ENCODE measurements at regions of chr17 and their contacts with region 1.

Region 1: GRCh38 chr17:80263253-80264204 is 2.9 kb downstream of the RNF213 start:
- DNase-seq: peak; percentile 94
- ATAC-seq: peak; percentile 37
- H3K4me3 Mint-ChIP-seq: peak overlapping the region; percentile 98
- H3K27ac Mint-ChIP-seq: peak overlapping the region; percentile 91
- H3K4me1 Mint-ChIP-seq: peaks cover 55% of the 10 kb centered on the region
- H3K27me3 Mint-ChIP-seq: no peaks in the 10 kb centered on the region

Region 2: GRCh38 chr17:79839363-79840268 is 423.9 kb before region 1 on chr17 and contains the start of gene CBX4:
- CTCF ChIA-PET with region 1: no interaction called
- POLR2A ChIA-PET with region 1: no interaction called
- intact Hi-C with region 1: loop called in 1 of 2 experiments (anchors 5 kb)
- DNase-seq: peak; percentile 96
- ATAC-seq: peak; percentile 80
- H3K4me3 Mint-ChIP-seq: peak within 1 kb of the TSS; percentile 92
- H3K27ac Mint-ChIP-seq: peak within 1 kb of the TSS; percentile 82
- H3K4me1 Mint-ChIP-seq: peaks cover 49% of the 10 kb centered on the region
- H3K27me3 Mint-ChIP-seq: peaks cover 29% of the 10 kb centered on the region
- total RNA-seq, gene CBX4: 14.9 to 18.5 TPM

Region 3: GRCh38 chr17:80101011-80101945 is 162.3 kb before region 1 on chr17 and contains the start of gene GAA:
- CTCF ChIA-PET with region 1: interaction called, 6 read pairs
- POLR2A ChIA-PET with region 1: no interaction called
- intact Hi-C with region 1: loop called in 1 of 2 experiments (anchors 1 kb)
- DNase-seq: peak; percentile 93
- ATAC-seq: peak; percentile 89
- H3K4me3 Mint-ChIP-seq: peak within 1 kb of the TSS; percentile 84
- H3K27ac Mint-ChIP-seq: peak within 1 kb of the TSS; percentile 68
- H3K4me1 Mint-ChIP-seq: peaks cover 26% of the 10 kb centered on the region
- H3K27me3 Mint-ChIP-seq: no peaks in the 10 kb centered on the region
- total RNA-seq, gene GAA: 28.4 to 32.8 TPM

Region 4: GRCh38 chr17:80219013-80219762 is 44.3 kb before region 1 on chr17:
- CTCF ChIA-PET with region 1: no interaction called
- POLR2A ChIA-PET with region 1: interaction called, 4 read pairs
- intact Hi-C with region 1: loop called (anchors 1 to 2 kb)
- DNase-seq: peak; percentile 95
- ATAC-seq: peak; percentile 87
- H3K4me3 Mint-ChIP-seq: peak overlapping the region; percentile 89
- H3K27ac Mint-ChIP-seq: peak overlapping the region; percentile 92
- H3K4me1 Mint-ChIP-seq: peaks cover 27% of the 10 kb centered on the region
- H3K27me3 Mint-ChIP-seq: no peaks in the 10 kb centered on the region

Region 5: DNA sequence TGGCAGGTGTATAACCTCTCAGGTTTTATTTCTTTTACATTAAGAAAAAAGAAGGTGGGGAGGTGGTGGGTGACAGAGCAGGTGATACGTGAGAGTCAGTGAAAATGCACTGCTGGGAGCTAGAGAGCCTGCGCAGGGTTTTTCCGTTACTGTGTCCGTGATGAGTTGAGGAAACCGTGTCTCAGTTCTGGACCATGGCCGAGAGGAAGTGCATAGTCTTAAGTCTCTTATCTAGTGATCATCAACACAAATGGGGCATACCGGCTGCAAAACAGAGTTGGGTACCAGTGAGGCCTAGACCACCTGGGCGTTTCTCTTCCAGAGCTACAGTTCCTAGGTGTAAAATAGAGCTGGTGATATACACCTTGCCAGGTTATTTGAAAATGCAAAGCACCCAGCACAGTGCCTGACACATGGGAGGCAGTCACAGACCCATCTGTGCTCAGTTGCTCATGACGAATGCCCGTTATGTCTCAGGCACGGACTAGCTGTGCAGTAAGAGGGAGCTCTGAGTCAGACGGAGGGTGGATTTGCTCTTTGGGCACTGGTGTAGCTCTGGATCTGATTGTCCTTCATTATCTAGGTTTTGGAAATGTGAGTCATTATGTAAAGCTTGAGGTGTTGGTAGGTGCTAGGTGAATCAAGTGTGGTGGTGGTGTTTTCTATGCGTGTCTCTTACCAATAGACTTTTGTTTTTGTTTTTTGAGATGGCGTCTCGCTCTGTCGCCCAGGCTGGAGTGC is 342.0 kb after region 1 on chr17:
- CTCF ChIA-PET with region 1: no interaction called
- POLR2A ChIA-PET with region 1: no interaction called
- intact Hi-C with region 1: loop called in 1 of 2 experiments (anchors 5 kb)
- DNase-seq: peak; percentile 89
- ATAC-seq: peak; percentile 100
- H3K4me3 Mint-ChIP-seq: peak overlapping the region; percentile 37
- H3K27ac Mint-ChIP-seq: peak overlapping the region; percentile 92
- H3K4me1 Mint-ChIP-seq: peaks cover 75% of the 10 kb centered on the region
- H3K27me3 Mint-ChIP-seq: no peaks in the 10 kb centered on the region

Region 6: GRCh38 chr17:80927791-80928216 is 664.3 kb after region 1 on chr17:
- CTCF ChIA-PET with region 1: no interaction called
- POLR2A ChIA-PET with region 1: no interaction called
- intact Hi-C with region 1: no loop called
- DNase-seq: no peak
- ATAC-seq: no peak
- H3K4me3 Mint-ChIP-seq: no peak overlapping the region
- H3K27ac Mint-ChIP-seq: no peak overlapping the region
- H3K4me1 Mint-ChIP-seq: no peaks in the 10 kb centered on the region
- H3K27me3 Mint-ChIP-seq: no peaks in the 10 kb centered on the region

Region 7: DNA sequence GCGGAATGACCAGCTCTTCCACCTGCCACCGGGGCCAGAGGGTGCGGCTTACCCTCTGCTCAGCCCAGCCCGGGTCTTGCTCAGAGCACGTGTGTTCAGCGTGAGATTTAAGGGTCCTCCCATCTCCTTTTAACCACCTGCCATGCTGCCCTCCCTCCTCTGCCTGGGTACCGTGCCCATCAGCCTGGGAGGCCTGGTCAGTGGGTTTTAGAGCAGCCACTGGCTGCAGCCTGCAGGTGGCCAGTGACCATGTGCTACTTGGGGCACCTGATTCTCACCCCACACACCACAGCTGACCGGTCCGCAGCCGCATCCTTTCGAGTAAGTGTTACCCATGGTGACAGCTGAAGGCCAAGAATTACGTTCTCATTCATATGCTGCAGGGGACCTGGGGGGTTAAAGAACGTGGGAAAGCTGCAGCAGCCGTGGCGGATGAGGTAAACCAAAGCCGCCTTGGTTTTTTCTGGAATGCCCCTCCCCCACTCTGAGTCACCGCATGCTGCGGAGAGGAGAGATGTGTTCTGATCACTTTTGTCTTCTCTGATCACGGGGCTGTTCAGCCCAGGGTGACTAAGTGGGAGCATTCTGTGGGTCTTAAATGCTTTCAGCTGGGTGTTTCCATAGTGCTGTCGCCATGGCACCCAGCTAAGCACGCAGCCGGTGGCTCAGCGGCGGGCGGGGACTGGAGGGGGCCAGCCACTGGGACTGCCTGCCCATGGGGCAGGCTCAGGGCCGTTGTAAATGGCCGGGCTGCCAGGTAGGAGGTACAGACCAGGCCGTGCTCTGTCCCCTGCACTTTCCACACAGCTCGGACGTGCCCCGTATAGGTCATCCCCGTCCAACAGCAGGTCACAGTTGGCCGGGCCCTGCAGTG is 831.2 kb after region 1 on chr17:
- CTCF ChIA-PET with region 1: no interaction called
- POLR2A ChIA-PET with region 1: no interaction called
- intact Hi-C with region 1: loop called in 1 of 2 experiments (anchors 10 kb)
- DNase-seq: peak; percentile 95
- ATAC-seq: peak; percentile 95
- H3K4me3 Mint-ChIP-seq: peak overlapping the region; percentile 26
- H3K27ac Mint-ChIP-seq: peak overlapping the region; percentile 60
- H3K4me1 Mint-ChIP-seq: peaks cover 43% of the 10 kb centered on the region
- H3K27me3 Mint-ChIP-seq: no peaks in the 10 kb centered on the region

Measured in activated CD4-positive, alpha-beta T cell treated with anti-CD3 and anti-CD28 coated beads for 36 hours (primary cell).